Endothelial cell of umbilical vein (primary cell): ENCODE measurements at regions of chr12 and their contacts with region 1.

Region 1: GRCh38 chr12:12837025-12837872 is 24.1 kb downstream of the DDX47 start:
- DNase-seq: peak; percentile 86
- H3K4me3 ChIP-seq: no peak overlapping the region
- H3K27ac ChIP-seq: peak overlapping the region; percentile 91
- H3K4me1 ChIP-seq: peaks cover 55% of the 10 kb centered on the region
- H3K27me3 ChIP-seq: no peaks in the 10 kb centered on the region
- CTCF ChIP-seq: peak; percentile 46 to 51
- POLR2A ChIP-seq: no peak

Region 2: GRCh38 chr12:12356886-12357718 is 480.1 kb before region 1 on chr12 and contains the start of gene BORCS5:
- CTCF ChIA-PET with region 1: no interaction called
- POLR2A ChIA-PET with region 1: no interaction called
- dilution Hi-C with region 1: no loop called
- intact Hi-C with region 1: no loop called
- DNase-seq: peak; percentile 90
- H3K4me3 ChIP-seq: peak within 1 kb of the TSS; percentile 45 to 89 (median 76)
- H3K27ac ChIP-seq: peak within 1 kb of the TSS; percentile 71
- H3K4me1 ChIP-seq: peaks cover 11% of the 10 kb centered on the region
- H3K27me3 ChIP-seq: no peaks in the 10 kb centered on the region
- CTCF ChIP-seq: peak in 1 of 2 donors; percentile 31
- POLR2A ChIP-seq: peak; percentile 93
- total RNA-seq, gene BORCS5: 10.5 and 11.5 TPM in 2 replicates

Region 3: GRCh38 chr12:12803186-12803585 is 34.1 kb before region 1 on chr12:
- CTCF ChIA-PET with region 1: interaction called, 15 read pairs
- POLR2A ChIA-PET with region 1: interaction called, 7 read pairs
- dilution Hi-C with region 1: no loop called
- intact Hi-C with region 1: loop called (anchors 1 kb)
- DNase-seq: peak; percentile 89
- H3K4me3 ChIP-seq: no peak overlapping the region
- H3K27ac ChIP-seq: peak overlapping the region; percentile 95
- H3K4me1 ChIP-seq: peaks cover 36% of the 10 kb centered on the region
- H3K27me3 ChIP-seq: no peaks in the 10 kb centered on the region
- CTCF ChIP-seq: no peak
- POLR2A ChIP-seq: no peak

Region 4: DNA sequence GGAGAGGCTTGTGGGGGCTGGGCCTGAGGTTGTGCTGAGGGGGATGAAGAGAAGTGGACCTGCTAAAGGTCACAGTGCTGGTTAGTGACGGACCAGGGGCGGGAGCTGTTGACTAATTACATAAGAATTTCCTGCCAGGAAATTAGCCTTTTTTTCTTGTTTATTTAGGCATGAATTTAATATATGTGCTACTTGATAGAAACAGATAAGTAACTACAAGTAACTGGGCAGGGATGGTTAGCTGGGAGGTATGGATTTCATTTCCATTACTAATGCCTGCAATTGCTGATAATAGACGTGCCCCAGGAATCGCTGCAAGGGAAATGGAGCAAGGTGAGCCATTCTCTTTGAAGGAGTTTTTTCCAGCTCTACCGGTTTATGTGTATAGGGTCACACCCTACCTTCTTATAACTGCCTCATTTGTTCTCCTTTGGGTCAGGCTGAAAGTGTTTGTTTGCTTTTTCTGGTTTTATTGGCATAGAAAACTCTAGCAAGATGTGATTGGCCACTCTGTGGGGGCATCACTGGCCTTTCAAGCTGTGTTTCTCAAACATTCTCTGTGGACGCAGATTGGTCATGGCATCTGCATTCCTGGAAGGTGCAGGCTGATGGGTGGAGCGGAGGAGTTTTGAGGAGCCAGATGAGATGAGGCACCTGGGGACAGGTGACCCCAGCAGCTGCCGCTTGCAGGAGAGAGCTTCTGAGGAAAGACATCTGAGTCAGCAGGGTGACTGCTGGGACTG is 35.1 kb after region 1 on chr12:
- CTCF ChIA-PET with region 1: interaction called, 40 read pairs
- POLR2A ChIA-PET with region 1: interaction called, 3 read pairs
- dilution Hi-C with region 1: no loop called
- intact Hi-C with region 1: loop called (anchors 1 kb)
- DNase-seq: peak; percentile 93
- H3K4me3 ChIP-seq: peak overlapping the region in 1 of 3 experiments; percentile 43
- H3K27ac ChIP-seq: peak overlapping the region; percentile 96
- H3K4me1 ChIP-seq: peaks cover 41% of the 10 kb centered on the region
- H3K27me3 ChIP-seq: no peaks in the 10 kb centered on the region
- CTCF ChIP-seq: no peak
- POLR2A ChIP-seq: peak; percentile 74

Region 5: DNA sequence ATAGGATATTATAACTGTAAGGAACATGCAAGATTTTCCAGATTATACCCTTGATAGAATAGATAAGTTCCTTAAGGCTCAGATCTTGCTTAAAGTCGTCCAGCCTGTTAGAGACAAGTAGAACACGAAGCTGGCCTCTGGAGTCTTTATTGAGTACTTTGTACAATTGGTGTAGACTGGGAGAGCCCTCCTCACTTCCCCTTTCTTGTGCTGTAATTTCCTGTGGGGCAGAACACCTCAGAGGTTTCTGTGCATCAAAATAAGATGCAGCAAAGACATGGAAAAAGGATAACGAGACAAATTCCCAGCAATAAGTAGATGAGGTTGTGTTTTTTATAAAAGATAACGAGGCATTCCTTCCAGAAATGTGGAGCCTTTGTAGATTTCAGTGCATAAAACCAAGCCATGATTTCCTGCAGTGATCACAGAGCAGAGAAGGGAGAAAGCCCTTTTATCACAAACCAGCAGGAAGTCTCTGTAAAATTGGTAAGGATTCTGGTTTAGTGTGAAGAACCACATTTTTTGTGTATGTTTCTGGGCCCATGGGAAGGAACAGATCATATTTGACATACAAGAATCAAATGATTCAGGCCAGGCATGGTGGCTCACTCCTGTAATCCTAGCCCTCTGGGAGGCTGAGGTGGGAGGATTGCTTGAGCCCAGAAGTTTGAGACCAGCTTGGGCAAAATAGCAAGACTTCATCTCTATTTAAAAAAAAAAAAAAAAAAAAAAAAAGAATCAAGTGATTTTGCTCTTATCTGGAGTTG is 72.2 kb after region 1 on chr12:
- CTCF ChIA-PET with region 1: interaction called, 78 read pairs
- POLR2A ChIA-PET with region 1: no interaction called
- dilution Hi-C with region 1: no loop called
- intact Hi-C with region 1: no loop called
- DNase-seq: no peak
- H3K4me3 ChIP-seq: no peak overlapping the region
- H3K27ac ChIP-seq: peak overlapping the region; percentile 38
- H3K4me1 ChIP-seq: peaks cover 26% of the 10 kb centered on the region
- H3K27me3 ChIP-seq: no peaks in the 10 kb centered on the region
- CTCF ChIP-seq: no peak
- POLR2A ChIP-seq: no peak

Region 6: GRCh38 chr12:13100882-13101769 is 263.9 kb after region 1 on chr12:
- CTCF ChIA-PET with region 1: no interaction called
- POLR2A ChIA-PET with region 1: no interaction called
- dilution Hi-C with region 1: no loop called
- intact Hi-C with region 1: loop called (anchors 2 kb)
- DNase-seq: peak; percentile 95
- H3K4me3 ChIP-seq: peak overlapping the region in 2 of 3 experiments; percentile 36 to 47
- H3K27ac ChIP-seq: peak overlapping the region; percentile 100
- H3K4me1 ChIP-seq: peaks cover 46% of the 10 kb centered on the region
- H3K27me3 ChIP-seq: no peaks in the 10 kb centered on the region
- CTCF ChIP-seq: no peak
- POLR2A ChIP-seq: no peak